Right ventricle myocardium inferior (tissue), 1 donor: ENCODE measurements at regions of chr15 and their contacts with region 1.

Region 1: DNA sequence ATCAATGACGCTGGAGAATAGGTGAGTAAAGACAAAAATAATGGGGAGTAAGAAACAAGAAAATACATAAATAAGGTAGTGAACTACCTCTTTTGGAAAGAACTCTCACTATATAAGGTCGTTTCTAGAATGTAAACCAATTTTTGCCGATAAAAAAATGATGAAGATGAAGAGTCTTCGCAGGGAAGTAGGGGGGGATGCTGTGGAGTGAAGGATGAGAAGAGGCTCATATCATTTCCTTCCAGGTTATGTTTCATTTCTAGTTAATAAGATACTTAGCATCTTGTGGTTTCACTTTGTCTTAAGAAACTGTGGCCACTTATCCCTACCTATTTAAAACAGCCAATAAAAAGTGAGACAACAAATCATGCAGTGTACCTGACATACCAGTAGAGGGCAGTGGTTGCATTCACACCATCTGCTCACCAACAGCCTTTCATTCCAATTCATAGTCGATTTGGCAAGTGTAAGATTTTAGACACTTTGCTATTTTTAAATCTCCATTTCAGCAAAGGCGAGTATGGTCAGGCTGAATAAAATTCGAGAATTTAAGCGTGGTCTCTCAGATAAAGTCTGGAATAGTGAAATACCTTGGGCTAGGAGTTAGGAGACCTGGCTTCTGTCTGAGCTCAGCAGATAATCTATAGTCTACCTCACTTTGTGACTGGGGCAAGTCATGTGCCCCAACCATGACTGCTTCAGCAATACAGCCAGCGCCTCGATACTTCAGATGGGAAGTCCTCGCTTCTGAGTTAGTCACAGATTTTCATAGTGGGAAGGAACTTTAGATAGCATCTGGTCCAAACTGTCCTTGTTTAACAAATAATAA is 28.9 kb upstream of the ICE2 start:
- DNase-seq: no peak
- ATAC-seq: peak; percentile 77

Region 2: GRCh38 chr15:61834076-61834697 is 1326.4 kb after region 1 on chr15:
- intact Hi-C with region 1: loop called (anchors 5 kb)
- DNase-seq: peak; percentile 85
- ATAC-seq: peak; percentile 79